ENCODE measurements at regions of chr14 and their contacts with region 1.

Region 1: GRCh38 chr14:34227834-34228649 is 234.0 kb downstream of the SPTSSA start:
- DNase-seq: peak; percentile 72 to 82
- ATAC-seq: peak; percentile 91
- H3K4me3 ChIP-seq: no peak overlapping the region
- H3K27ac ChIP-seq: no peak overlapping the region
- H3K4me1 ChIP-seq: no peaks in the 10 kb centered on the region
- H3K27me3 ChIP-seq: no peaks in the 10 kb centered on the region

Region 2: DNA sequence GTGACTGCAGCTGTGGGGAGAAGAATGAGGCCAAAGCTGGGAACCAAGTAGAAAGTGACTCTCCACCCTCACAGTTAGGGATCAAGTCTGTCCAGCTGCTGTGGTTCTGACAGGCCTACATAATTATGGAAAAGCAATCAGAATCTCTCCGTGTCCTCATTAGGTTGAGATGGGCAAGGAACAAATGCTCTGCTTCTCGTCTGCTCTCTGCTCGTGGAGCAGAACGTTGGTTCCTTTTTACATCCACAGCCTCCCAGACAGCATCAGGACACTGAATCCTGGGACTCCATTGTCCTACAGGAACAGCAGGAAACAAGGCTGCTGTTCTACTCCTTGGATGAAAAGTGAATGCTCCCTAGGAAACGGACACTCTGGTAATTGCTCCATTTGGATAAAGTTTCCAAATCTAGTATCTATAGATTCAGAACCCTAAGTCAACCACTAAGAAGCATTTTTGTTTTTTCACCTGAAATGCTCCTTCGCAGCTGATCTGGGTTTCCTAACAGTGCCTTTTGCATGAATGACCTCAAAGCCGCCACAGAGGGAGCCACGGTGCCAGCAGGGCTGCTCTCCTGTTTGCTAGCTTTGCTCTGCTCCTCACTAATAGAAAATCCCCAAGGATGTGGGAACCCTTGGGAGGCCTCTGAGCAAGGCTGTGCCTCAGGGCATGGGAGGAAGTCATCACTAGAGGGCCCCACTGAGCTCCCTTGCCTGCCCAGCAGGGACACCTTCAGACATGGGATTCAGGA is 379.2 kb before region 1 on chr14:
- intact Hi-C with region 1: loop called in 1 of 2 experiments (anchors 5 kb)
- DNase-seq: peak; percentile 67 to 77
- ATAC-seq: peak; percentile 62
- H3K4me3 ChIP-seq: no peak overlapping the region
- H3K27ac ChIP-seq: no peak overlapping the region
- H3K4me1 ChIP-seq: peaks cover 0 to 2% of the 10 kb centered on the region in 2 donors
- H3K27me3 ChIP-seq: no peaks in the 10 kb centered on the region

Region 3: GRCh38 chr14:34098045-34098984 is 129.7 kb before region 1 on chr14:
- intact Hi-C with region 1: loop called in 1 of 2 experiments (anchors 2 kb)
- DNase-seq: no peak
- ATAC-seq: peak; percentile 54
- H3K4me3 ChIP-seq: no peak overlapping the region
- H3K27ac ChIP-seq: no peak overlapping the region
- H3K4me1 ChIP-seq: no peaks in the 10 kb centered on the region
- H3K27me3 ChIP-seq: no peaks in the 10 kb centered on the region

Region 4: DNA sequence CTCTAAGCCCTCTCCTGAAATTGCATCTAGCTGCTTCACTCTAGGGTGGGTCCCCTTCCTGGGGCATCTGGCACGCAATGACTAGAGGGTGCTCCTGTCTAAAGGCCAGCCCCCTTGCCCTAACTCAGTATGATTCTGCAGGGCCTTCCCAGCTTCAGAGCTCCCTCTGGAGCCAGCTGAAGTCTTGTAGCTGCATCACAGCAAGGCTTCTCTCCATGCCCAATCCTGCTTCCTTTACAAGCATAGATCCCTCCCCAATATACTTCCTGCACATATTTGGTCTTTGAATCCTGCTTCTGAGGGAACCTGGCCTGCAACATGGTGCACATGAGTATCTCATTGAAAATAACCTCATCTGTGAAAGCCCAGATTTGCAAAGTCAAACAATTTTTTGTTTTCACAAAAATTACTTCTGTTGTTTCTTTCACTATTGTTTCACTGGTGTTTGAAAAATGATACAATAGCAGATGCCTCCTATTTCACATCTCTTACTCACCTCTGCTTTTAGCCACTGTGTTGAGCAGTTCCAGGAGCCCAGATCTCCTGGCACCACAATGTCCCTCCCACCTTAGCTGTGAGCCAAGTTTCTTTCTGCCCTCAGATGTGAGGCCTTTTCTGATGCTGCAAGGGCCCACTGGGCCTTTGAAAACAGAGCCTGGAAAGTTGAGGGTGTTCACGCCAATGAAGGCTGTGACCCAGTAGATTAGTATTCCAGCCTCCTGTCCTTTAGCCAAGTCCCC is 107.6 kb before region 1 on chr14:
- intact Hi-C with region 1: loop called in 1 of 2 experiments (anchors 5 kb)
- DNase-seq: no peak
- ATAC-seq: no peak
- H3K4me3 ChIP-seq: no peak overlapping the region
- H3K27ac ChIP-seq: no peak overlapping the region
- H3K4me1 ChIP-seq: no peaks in the 10 kb centered on the region
- H3K27me3 ChIP-seq: no peaks in the 10 kb centered on the region

Measured in aorta (tissue), 5 donors.